Mammary epithelial cell (primary cell): ENCODE measurements at regions of chr2 and their contacts with region 1.

Region 1: DNA sequence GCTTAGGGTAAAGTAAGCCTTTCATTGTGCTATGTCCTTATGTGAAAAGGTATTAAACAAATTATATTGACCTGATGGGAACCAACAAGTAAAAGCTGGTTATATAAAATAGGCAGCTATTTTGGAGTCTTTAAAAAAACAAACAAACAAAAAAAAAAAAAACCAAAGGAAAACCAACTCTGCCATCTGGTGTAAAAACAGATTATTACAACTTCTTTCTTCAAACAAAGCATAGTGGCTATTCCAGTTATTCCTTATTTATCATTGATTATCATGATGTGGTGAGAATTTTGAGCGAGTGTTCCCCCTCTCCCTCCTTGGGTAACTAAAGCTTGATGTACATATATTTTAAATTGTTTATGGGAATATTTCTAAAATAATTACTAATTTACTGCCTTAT is 122.4 kb upstream of the FHL2 start:
- DNase-seq: no peak
- H3K4me3 ChIP-seq: no peak overlapping the region
- H3K27ac ChIP-seq: peak overlapping the region; percentile 6
- H3K4me1 ChIP-seq: peaks cover 7% of the 10 kb centered on the region
- H3K27me3 ChIP-seq: no peaks in the 10 kb centered on the region
- CTCF ChIP-seq: peak; percentile 31 to 47

Region 2: GRCh38 chr2:105220604-105221003 is 300.6 kb before region 1 on chr2:
- CTCF ChIA-PET with region 1: no interaction called
- dilution Hi-C with region 1: no loop called
- in situ Hi-C with region 1: no loop called
- intact Hi-C with region 1: no loop called
- DNase-seq: no peak
- H3K4me3 ChIP-seq: no peak overlapping the region
- H3K27ac ChIP-seq: no peak overlapping the region
- H3K4me1 ChIP-seq: no peaks in the 10 kb centered on the region
- H3K27me3 ChIP-seq: no peaks in the 10 kb centered on the region
- CTCF ChIP-seq: no peak

Region 3: GRCh38 chr2:105287692-105288091 is 233.5 kb before region 1 on chr2:
- CTCF ChIA-PET with region 1: no interaction called
- dilution Hi-C with region 1: no loop called
- in situ Hi-C with region 1: no loop called
- intact Hi-C with region 1: loop called (anchors 5 kb)
- DNase-seq: peak; percentile 29
- H3K4me3 ChIP-seq: no peak overlapping the region
- H3K27ac ChIP-seq: no peak overlapping the region
- H3K4me1 ChIP-seq: peaks cover under 1% of the 10 kb centered on the region
- H3K27me3 ChIP-seq: no peaks in the 10 kb centered on the region
- CTCF ChIP-seq: peak; percentile 60 to 66

Region 4: DNA sequence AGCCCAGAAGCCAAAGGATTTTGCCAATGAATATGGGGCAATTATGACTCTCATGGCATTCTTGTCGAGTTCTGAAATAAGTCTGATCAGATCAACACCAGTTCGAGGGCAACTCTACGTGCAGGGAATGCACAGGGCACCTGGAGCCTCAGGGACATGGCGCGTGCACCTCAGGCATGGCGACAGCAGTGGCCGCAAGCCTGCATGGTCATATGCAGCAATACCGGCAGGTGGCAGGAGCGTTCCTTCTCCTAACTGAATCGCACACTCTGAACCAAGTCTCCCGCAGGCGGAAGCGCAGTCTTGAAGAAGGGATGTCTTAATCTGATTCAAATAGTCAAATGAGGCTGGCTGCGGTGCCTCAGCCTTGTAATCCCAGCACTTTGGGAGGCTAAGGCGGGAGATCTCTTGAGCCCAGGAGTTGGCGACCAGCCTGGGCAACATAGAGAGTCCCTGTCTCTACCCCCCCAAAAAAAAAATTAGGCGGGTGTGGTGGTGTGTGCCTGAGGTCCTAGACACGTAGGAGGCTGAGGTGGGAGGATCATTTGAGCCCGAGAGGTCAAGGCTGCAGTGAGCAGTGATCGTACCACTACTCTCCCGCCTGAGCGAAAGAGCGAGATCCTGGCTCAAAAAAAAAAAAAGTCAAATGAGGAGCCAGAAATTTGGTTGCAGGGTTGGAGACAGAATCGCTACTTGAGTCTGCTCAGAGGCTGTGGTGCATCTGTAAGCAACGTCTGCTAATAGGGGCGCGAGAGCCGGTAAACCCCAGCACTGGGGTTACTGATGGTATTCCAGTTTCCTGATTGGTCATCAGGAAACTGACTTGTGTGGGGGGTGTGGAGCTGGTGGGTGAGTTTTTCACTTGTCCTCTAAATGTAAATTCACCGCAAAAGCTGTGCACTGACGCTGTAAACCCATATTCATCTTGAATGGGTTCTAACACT is 151.2 kb before region 1 on chr2:
- CTCF ChIA-PET with region 1: no interaction called
- dilution Hi-C with region 1: loop called (anchors 5 kb)
- in situ Hi-C with region 1: loop called in 1 of 2 experiments (anchors 5 kb)
- intact Hi-C with region 1: loop called (anchors 1 kb)
- DNase-seq: peak; percentile 71
- H3K4me3 ChIP-seq: no peak overlapping the region
- H3K27ac ChIP-seq: no peak overlapping the region
- H3K4me1 ChIP-seq: peaks cover 35% of the 10 kb centered on the region
- H3K27me3 ChIP-seq: no peaks in the 10 kb centered on the region
- CTCF ChIP-seq: peak; percentile 81 to 91

Region 5: GRCh38 chr2:105397964-105398698 is 123.1 kb before region 1 on chr2:
- CTCF ChIA-PET with region 1: interaction called, 15 read pairs
- dilution Hi-C with region 1: no loop called
- in situ Hi-C with region 1: no loop called
- intact Hi-C with region 1: loop called (anchors 1 kb)
- DNase-seq: no peak
- H3K4me3 ChIP-seq: peak overlapping the region; percentile 96 to 98 (median 96)
- H3K27ac ChIP-seq: peak overlapping the region; percentile 92
- H3K4me1 ChIP-seq: peaks cover 45% of the 10 kb centered on the region
- H3K27me3 ChIP-seq: no peaks in the 10 kb centered on the region
- CTCF ChIP-seq: peak in 1 of 2 donors; percentile 12

Region 6: DNA sequence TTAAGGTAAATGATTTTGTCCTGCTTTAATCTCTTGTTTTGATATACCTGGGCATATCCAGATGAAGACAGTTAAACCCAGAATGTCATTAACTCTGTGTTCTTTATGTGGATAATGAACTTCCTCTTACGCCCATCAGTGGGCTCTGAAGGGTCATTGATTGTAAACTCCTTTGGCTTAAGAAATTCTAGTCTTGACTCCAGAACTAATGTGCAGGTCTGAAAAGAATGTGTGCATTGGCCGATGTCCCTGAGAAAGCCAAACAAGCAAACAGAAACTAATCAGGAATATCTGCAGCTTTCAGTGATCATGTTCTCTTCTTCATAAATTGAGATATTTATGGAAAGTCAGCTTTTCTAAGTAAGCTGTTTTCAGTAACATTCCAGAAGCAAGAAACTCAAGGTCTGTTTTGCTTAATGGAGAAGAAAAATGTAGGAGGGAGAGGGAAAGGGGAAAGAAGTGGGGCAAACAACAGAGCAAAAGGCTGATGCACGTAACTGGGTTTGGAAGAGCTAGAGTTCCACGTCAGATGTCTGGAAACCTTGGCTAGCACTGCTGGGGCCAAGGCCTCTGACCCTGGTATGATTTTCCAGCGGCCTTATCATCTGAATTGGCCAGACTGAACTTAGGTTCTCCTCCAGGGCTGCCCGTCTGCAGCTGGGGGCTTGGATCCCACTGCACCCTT is 61.0 kb before region 1 on chr2:
- CTCF ChIA-PET with region 1: no interaction called
- dilution Hi-C with region 1: no loop called
- in situ Hi-C with region 1: loop called in 1 of 2 experiments (anchors 10 kb)
- intact Hi-C with region 1: loop called (anchors 1 kb)
- DNase-seq: no peak
- H3K4me3 ChIP-seq: no peak overlapping the region
- H3K27ac ChIP-seq: no peak overlapping the region
- H3K4me1 ChIP-seq: peaks cover 10% of the 10 kb centered on the region
- H3K27me3 ChIP-seq: no peaks in the 10 kb centered on the region
- CTCF ChIP-seq: no peak

Region 7: DNA sequence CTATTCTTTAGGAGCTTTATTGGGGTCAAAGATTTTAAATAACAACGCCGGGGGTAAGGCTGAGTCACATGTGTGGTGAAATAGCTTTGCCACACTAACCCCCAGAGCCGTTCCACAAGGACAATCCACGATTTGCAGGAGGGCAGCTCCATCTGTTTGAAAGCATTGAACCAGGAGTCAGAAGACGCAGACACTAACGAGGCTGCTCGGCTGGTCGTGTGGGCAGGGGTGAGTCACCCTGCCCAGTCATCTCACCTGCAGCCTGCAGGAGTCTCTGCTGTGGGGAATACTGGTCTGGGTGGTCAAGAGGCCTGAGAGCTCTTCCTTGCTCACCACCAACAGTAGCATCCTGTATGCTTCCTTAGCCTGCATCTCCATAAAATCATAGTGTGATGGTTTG is 74.3 kb after region 1 on chr2:
- CTCF ChIA-PET with region 1: no interaction called
- dilution Hi-C with region 1: no loop called
- in situ Hi-C with region 1: no loop called
- intact Hi-C with region 1: no loop called
- DNase-seq: peak; percentile 76
- H3K4me3 ChIP-seq: no peak overlapping the region
- H3K27ac ChIP-seq: no peak overlapping the region
- H3K4me1 ChIP-seq: peaks cover 13% of the 10 kb centered on the region
- H3K27me3 ChIP-seq: no peaks in the 10 kb centered on the region
- CTCF ChIP-seq: peak; percentile 8 to 41